Right ventricle myocardium superior (tissue), 1 donor: ENCODE measurements at regions of chr2 and their contacts with region 1.

Region 1: DNA sequence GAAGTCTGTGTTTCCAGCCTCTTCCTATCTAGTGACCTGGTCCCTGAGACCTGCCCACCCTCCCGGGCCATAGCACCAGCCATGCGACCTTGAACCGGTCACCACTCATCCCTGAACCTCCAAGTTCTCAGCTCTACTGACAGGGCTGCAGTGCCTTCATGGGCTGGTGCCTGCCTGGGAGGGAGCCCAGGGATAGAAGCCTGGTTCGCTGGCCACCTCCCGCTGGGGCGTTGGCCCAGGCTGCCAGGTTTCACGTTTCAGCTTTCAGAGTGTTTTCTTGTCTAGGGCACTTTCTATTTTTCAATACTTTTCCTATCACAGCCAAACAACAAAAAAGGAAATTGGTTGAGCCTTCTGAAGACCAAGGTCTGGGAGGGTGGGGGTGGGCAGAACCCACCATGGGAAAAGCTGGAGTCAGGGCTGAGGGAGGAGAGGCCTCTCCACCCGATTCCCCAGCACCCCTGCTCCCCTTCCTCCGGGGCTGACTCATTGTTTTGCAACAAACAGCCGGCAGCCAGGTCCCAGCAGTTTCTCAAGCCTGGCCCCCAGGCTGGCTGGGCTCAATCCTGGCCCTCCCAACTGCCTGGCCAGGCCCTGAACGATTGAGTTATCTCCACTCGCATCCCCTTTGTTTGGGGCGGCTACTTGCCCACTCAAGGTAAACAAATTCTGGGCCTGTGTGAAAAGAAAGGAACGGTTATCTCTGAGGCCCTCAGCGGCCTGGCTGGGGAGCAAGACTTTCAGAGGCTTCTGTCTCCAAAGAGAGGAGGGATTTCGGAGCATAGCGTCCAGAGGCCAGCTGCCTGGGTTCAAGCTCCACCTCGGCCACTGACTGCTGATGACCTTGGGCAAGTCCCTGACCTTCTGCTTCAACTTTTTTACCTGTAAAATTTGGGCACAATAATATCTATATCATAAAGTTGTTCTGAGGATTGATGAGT is 47.5 kb downstream of the ZFP36L2 start:
- DNase-seq: peak; percentile 83
- ATAC-seq: peak; percentile 87

Region 2: DNA sequence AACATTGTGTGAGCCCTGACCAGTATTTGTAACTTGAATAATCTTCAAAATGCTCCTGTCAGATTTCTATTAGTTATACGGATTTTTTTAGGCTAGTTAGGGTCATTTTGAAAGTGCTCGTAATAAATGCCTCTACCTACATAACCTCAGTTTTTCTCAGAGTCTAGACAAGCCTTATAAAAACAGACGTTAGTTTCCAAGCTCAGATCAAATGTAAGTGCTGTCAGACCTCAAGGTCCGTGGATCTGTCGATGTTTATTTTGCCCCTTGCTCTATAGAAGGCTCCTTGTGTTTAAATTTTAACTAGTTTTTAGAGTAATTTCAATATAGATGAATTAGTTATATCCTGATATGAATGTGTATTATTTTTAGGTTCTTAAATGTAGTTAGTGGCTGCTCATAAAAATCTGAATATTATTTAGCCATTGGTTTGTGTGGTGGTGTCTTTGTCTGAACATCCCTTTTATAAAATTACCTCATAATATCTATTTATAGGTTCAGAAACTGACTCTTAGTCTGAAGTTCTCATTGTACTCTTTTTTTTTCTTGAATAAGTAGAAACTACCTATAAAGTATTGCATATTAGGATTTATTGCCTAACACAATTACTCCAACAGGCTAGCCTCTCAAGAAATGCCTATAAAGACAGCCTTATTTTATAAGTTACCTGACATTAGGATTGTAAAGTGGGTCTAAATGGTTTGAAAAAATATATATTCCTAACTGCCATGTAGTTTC is 539.4 kb before region 1 on chr2:
- intact Hi-C with region 1: no loop called
- DNase-seq: no peak
- ATAC-seq: no peak

Region 3: GRCh38 chr2:42743413-42743972 is 435.4 kb before region 1 on chr2:
- intact Hi-C with region 1: no loop called
- DNase-seq: no peak
- ATAC-seq: no peak

Region 4: GRCh38 chr2:43210467-43211303 is 31.8 kb after region 1 on chr2:
- intact Hi-C with region 1: loop called (anchors 5 kb)
- DNase-seq: peak; percentile 77
- ATAC-seq: peak; percentile 71